ENCODE measurements at regions of chr7 and their contacts with region 1.

Region 1: GRCh38 chr7:1065263-1066260 is 21.2 kb downstream of the GPR146 start:
- DNase-seq: no peak
- ATAC-seq: peak; percentile 97
- H3K4me3 ChIP-seq: no peak overlapping the region
- H3K27ac ChIP-seq: no peak overlapping the region
- H3K4me1 ChIP-seq: peaks cover 10% of the 10 kb centered on the region
- H3K27me3 ChIP-seq: no peaks in the 10 kb centered on the region
- CTCF ChIP-seq: peak; percentile 99

Region 2: GRCh38 chr7:1020849-1021251 is 44.7 kb before region 1 on chr7:
- CTCF ChIA-PET with region 1: interaction called, 13 read pairs
- POLR2A ChIA-PET with region 1: no interaction called
- in situ Hi-C with region 1: no loop called
- intact Hi-C with region 1: no loop called
- DNase-seq: no peak
- ATAC-seq: peak; percentile 31; the same call in 1 of the 2 replicates
- H3K4me3 ChIP-seq: no peak overlapping the region
- H3K27ac ChIP-seq: no peak overlapping the region
- H3K4me1 ChIP-seq: peaks cover 7% of the 10 kb centered on the region
- H3K27me3 ChIP-seq: no peaks in the 10 kb centered on the region
- CTCF ChIP-seq: no peak; the same call in 1 of the 2 replicates